Activated naive CD8-positive, alpha-beta T cell treated with anti-CD3 and anti-CD28 coated beads, Interleukin-2, amount 10 ng/mL, durations not matched to agents 7 days and 5 days (primary cell): ENCODE measurements at regions of chr14 and their contacts with region 1.

Region 1: DNA sequence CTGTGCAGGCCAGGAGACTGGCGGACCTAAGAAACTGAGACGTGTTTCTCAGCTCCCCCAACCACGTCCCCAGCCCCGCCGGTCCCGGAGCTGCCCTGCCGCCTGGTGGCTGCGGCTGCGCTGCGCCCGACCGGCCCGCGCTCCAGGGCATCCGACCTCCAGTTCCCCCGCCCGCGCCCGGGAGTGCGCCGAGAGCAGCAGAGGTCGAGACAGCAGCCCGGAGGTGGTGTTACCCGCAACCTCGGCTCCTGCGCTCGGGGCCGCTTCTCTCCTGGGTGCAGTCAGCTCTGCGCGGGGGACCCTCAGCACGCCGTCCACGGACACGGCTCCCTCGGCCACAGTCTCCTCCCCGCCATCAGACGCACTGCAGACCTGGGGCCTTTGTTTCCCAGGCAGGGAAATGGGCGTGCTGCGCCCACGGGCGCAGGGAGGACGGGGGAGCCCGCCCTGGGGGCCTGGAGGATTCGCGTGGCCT is 21.6 kb upstream of the GPR132 start:
- DNase-seq: peak; percentile 94
- ATAC-seq: peak; percentile 87
- H3K4me3 Mint-ChIP-seq: peak overlapping the region; percentile 78
- H3K27ac Mint-ChIP-seq: peak overlapping the region; percentile 63
- H3K4me1 Mint-ChIP-seq: peaks cover 16% of the 10 kb centered on the region
- H3K27me3 Mint-ChIP-seq: peaks cover 12% of the 10 kb centered on the region

Region 2: DNA sequence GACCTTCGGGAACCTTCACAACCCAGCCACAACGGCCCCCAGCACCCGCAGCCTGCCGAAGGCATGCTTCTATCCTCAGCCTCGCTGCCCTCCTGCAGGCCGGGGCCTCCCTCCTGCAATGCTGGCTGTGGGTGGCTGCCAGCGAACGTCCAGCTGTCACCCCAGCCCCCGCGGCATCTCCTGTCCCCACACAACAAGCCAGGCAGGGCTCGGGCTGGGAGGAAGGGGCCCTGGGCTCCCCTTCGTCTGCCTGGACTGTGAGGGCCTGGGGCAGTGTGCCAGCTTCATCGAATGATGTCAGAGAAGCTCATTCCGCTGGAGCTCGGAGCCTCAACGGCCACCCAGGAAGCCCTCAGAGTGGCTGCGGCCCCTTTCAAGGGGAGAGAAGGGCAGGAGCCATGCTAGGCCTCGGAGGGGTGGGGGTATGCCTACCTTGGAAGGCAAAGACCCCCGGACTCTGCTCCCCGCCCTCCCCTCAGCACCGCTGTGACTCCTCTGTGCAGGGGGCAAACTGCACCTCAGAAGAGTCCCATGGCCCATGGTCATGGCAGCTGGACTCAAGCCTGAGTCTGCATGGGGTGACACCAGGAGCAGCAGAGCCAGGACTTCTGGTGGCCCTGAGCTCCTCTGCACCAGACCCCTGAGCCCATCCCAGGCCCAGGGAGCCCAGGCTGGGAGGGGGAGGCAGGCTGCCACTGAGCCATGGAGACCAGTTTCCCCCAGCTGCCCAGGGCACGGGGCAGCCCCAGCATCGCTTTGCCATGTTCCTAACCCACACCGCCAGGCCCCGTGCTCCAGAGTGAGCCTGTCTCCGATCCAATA is 532.1 kb before region 1 on chr14:
- POLR2A ChIA-PET with region 1: no interaction called
- DNase-seq: no peak
- ATAC-seq: no peak
- H3K4me3 Mint-ChIP-seq: no peak overlapping the region
- H3K27ac Mint-ChIP-seq: no peak overlapping the region
- H3K4me1 Mint-ChIP-seq: no peaks in the 10 kb centered on the region
- H3K27me3 Mint-ChIP-seq: no peaks in the 10 kb centered on the region

Region 3: GRCh38 chr14:105075379-105076295 is 11.2 kb before region 1 on chr14:
- POLR2A ChIA-PET with region 1: interaction called, 27 read pairs
- DNase-seq: peak; percentile 72
- ATAC-seq: peak; percentile 85
- H3K4me3 Mint-ChIP-seq: peak overlapping the region; percentile 68
- H3K27ac Mint-ChIP-seq: peak overlapping the region; percentile 72
- H3K4me1 Mint-ChIP-seq: peaks cover 17% of the 10 kb centered on the region
- H3K27me3 Mint-ChIP-seq: peaks cover 8% of the 10 kb centered on the region